Panc1 (cell line): ENCODE measurements at regions of chr3 and their contacts with region 1.

Region 1: GRCh38 chr3:172946061-172946460 is 195.0 kb downstream of the SPATA16 start:
- DNase-seq: no peak
- ATAC-seq: 0 out of 2 replicates have a peak, but pooled peaks have one; percentile 26
- H3K4me3 ChIP-seq: no peak overlapping the region
- H3K27ac ChIP-seq: no peak overlapping the region
- H3K4me1 ChIP-seq: no peaks in the 10 kb centered on the region
- H3K27me3 ChIP-seq: no peaks in the 10 kb centered on the region
- CTCF ChIP-seq: no peak

Region 2: GRCh38 chr3:173066044-173067004 is 120.3 kb after region 1 on chr3:
- CTCF ChIA-PET with region 1: interaction called, 12 read pairs
- POLR2A ChIA-PET with region 1: no interaction called
- in situ Hi-C with region 1: no loop called
- intact Hi-C with region 1: no loop called
- DNase-seq: no peak
- ATAC-seq: no peak
- H3K4me3 ChIP-seq: no peak overlapping the region
- H3K27ac ChIP-seq: no peak overlapping the region
- H3K4me1 ChIP-seq: no peaks in the 10 kb centered on the region
- H3K27me3 ChIP-seq: no peaks in the 10 kb centered on the region
- CTCF ChIP-seq: no peak